ENCODE measurements at regions of chr19 and their contacts with region 1.

Region 1: GRCh38 chr19:39970675-39971379 is at the start of gene PSMC4:
- DNase-seq: peak; percentile 99
- ATAC-seq: peak; percentile 100
- H3K4me3 ChIP-seq: peak within 1 kb of the TSS; percentile 79 to 91
- H3K27ac ChIP-seq: peak within 1 kb of the TSS in 1 of 2 donors; percentile 88
- H3K4me1 ChIP-seq: no peaks in the 10 kb centered on the region
- H3K27me3 ChIP-seq: no peaks in the 10 kb centered on the region
- total RNA-seq, gene PSMC4: 53.3 to 66.8 TPM

Region 2: DNA sequence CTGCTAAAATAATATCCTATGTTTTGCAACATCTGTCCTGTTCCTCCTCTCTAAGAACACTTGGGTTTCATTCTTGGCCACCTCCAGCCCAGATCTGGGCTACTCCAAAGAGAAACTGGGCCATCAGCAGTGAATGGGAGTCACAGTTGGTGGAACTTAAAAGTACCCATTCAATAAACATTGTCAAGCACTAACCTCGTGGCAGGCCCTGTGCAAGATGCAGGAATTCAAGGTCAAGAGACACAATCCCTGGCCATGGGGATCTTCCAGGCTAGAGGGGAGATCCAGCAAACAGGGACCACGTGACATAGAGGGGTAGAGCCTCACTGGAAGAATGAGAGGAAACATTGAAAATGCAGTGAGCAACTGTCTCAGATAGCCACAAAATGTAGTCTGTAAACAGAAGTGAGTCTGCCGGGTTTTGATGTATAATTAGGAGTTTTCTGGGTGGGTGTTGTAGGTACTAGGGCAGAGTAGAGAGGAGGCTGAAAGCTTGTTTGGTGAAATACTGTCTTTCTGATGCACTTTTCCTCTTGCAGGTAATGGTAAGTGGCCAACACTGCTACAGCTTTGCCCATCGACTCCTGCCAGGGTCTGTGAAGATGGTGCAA is 416.0 kb before region 1 on chr19:
- intact Hi-C with region 1: loop called in 1 of 2 experiments (anchors 5 kb)
- DNase-seq: no peak
- ATAC-seq: no peak
- H3K4me3 ChIP-seq: no peak overlapping the region
- H3K27ac ChIP-seq: no peak overlapping the region
- H3K4me1 ChIP-seq: no peaks in the 10 kb centered on the region
- H3K27me3 ChIP-seq: no peaks in the 10 kb centered on the region

Region 3: GRCh38 chr19:39792999-39793546 is 177.8 kb before region 1 on chr19:
- intact Hi-C with region 1: loop called (anchors 1 to 2 kb)
- DNase-seq: peak; percentile 85 to 94
- ATAC-seq: peak; percentile 94
- H3K4me3 ChIP-seq: peak overlapping the region; percentile 57 to 80
- H3K27ac ChIP-seq: no peak overlapping the region
- H3K4me1 ChIP-seq: no peaks in the 10 kb centered on the region
- H3K27me3 ChIP-seq: no peaks in the 10 kb centered on the region

Region 4: GRCh38 chr19:40025938-40026596 is 55.2 kb after region 1 on chr19:
- intact Hi-C with region 1: no loop called
- DNase-seq: no peak
- ATAC-seq: no peak
- H3K4me3 ChIP-seq: no peak overlapping the region
- H3K27ac ChIP-seq: no peak overlapping the region
- H3K4me1 ChIP-seq: no peaks in the 10 kb centered on the region
- H3K27me3 ChIP-seq: no peaks in the 10 kb centered on the region